Gastrocnemius medialis (tissue), 4 donors: ENCODE measurements at regions of chr7 and their contacts with region 1.

Region 1: GRCh38 chr7:66628361-66629140 is at the start of gene KCTD7:
- DNase-seq: peak; percentile 98
- ATAC-seq: peak; percentile 81
- H3K4me3 ChIP-seq: peak within 1 kb of the TSS; percentile 74 to 91 (median 80)
- H3K27ac ChIP-seq: peak within 1 kb of the TSS; percentile 86 to 98 (median 96)
- H3K4me1 ChIP-seq: peaks cover 6 to 11% of the 10 kb centered on the region in 2 donors
- H3K27me3 ChIP-seq: no peaks in the 10 kb centered on the region
- CTCF ChIP-seq: no peak
- POLR2A ChIP-seq: peak; percentile 99
- total RNA-seq, gene KCTD7: 3.0 to 6.0 (median 5.5) TPM

Region 2: GRCh38 chr7:66557608-66558143 is 70.9 kb before region 1 on chr7:
- in situ Hi-C with region 1: no loop called
- intact Hi-C with region 1: loop called (anchors 2 kb)
- DNase-seq: peak; percentile 27 to 55
- ATAC-seq: peak; percentile 64 to 73
- H3K4me3 ChIP-seq: no peak overlapping the region
- H3K27ac ChIP-seq: no peak overlapping the region
- H3K4me1 ChIP-seq: peaks cover 0 to 7% of the 10 kb centered on the region in 2 donors
- H3K27me3 ChIP-seq: no peaks in the 10 kb centered on the region
- CTCF ChIP-seq: peak; percentile 87 to 97 (median 91)
- POLR2A ChIP-seq: no peak

Region 3: DNA sequence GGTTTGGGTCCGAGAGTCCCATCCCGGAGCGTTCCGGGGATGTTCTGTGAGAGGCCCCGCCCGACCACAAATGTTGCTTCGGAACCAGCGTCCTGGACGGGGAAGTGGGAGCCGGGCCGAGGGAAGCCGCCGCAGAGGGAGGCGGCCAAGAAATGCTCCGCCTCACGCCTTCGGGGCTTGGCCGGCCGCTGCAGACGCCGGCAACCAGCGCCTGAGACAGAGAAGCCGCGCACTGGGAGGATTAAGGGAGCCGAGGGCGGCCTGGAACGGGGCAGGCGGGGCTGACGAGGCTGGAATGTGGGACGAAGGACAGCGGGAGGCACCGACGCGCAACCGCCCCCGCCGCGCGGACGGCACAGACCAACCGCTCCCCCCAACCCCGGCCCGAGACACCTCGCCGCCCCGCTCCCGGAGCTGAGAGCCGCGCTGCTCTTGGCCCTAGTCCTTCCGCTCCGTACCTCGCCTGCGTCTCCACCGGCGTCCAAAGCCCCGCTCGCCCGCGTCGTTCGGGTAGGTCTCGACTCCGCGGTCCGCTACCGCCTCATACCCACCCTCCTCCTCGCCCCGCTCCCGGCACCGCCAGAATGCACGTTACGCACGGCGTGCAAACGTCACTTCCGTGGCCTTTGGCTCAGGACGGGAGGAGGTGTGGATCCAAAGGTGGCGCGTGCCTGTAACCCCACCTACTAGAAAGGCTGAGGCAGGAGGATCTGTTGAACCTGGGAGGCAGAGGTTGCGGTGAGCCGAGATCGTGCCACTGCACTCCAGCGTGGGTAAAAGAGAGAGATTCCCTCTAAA is 36.6 kb before region 1 on chr7:
- in situ Hi-C with region 1: loop called in 1 of 4 experiments (anchors 5 kb)
- intact Hi-C with region 1: loop called (anchors 1 kb)
- DNase-seq: peak; percentile 88 to 92
- ATAC-seq: peak; percentile 97
- H3K4me3 ChIP-seq: peak overlapping the region; percentile 70 to 94 (median 88)
- H3K27ac ChIP-seq: peak overlapping the region; percentile 95 to 98 (median 96)
- H3K4me1 ChIP-seq: peaks cover 30 to 33% of the 10 kb centered on the region in 2 donors
- H3K27me3 ChIP-seq: no peaks in the 10 kb centered on the region
- CTCF ChIP-seq: no peak
- POLR2A ChIP-seq: peak; percentile 97 to 98

Region 4: GRCh38 chr7:66654123-66654732 is 25.7 kb after region 1 on chr7:
- in situ Hi-C with region 1: no loop called
- intact Hi-C with region 1: loop called (anchors 1 kb)
- DNase-seq: peak; percentile 95 to 97
- ATAC-seq: peak; percentile 97
- H3K4me3 ChIP-seq: peak overlapping the region; percentile 81 to 99 (median 87)
- H3K27ac ChIP-seq: peak overlapping the region; percentile 89 to 100 (median 99)
- H3K4me1 ChIP-seq: peaks cover 11 to 13% of the 10 kb centered on the region in 2 donors
- H3K27me3 ChIP-seq: no peaks in the 10 kb centered on the region
- CTCF ChIP-seq: peak in 2 of 5 experiments; percentile 3 to 32
- POLR2A ChIP-seq: peak; percentile 97 to 99

Region 5: DNA sequence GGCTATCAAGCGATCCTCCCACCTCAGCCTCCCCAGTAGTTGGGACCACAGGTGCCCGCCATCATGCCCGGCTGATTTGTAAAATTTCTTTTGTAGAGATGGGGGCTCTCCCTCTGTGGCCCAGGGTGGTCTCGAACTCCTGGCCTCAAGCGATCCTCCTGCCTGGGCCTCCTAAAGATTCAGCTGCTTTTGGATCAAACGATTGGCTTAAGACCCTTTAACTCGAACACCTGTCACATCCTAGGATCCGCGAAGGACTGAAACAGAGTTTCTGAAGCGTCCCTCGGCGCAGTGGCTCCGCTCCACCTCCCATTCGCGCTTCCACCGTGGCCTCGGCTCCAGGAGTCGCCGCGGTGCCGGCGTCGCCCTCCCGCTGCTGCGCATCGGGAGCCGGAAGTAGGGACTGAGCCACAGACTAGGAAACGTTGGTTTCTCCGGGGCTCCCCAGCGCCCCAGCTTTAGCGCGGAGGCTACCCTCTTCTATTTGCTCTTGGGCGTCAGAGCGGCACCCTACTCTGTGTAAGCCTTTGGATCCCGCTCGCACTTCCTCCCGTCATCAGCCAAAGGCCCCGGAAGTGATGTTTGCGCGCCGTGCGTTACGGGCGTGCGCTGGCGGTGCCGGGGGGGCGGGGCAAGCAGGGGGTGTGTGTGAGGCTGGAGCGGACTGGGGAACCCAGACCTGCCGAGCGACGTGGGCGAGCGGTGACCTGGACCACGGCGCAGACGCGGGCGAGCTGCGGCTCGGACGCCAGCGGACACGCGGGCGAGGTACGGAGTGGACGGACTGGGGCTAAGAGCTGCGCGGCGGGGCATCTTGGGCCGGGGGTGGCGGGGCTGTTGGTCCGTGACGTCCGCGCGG is 53.2 kb after region 1 on chr7:
- in situ Hi-C with region 1: no loop called
- intact Hi-C with region 1: loop called (anchors 2 kb)
- DNase-seq: peak; percentile 93 to 94
- ATAC-seq: peak; percentile 98 to 99
- H3K4me3 ChIP-seq: peak overlapping the region; percentile 80 to 100 (median 98)
- H3K27ac ChIP-seq: peak overlapping the region; percentile 98 to 100 (median 99)
- H3K4me1 ChIP-seq: peaks cover 12 to 20% of the 10 kb centered on the region in 2 donors
- H3K27me3 ChIP-seq: no peaks in the 10 kb centered on the region
- CTCF ChIP-seq: peak in 1 of 5 experiments; percentile 6
- POLR2A ChIP-seq: peak; percentile 95 to 96

Region 6: DNA sequence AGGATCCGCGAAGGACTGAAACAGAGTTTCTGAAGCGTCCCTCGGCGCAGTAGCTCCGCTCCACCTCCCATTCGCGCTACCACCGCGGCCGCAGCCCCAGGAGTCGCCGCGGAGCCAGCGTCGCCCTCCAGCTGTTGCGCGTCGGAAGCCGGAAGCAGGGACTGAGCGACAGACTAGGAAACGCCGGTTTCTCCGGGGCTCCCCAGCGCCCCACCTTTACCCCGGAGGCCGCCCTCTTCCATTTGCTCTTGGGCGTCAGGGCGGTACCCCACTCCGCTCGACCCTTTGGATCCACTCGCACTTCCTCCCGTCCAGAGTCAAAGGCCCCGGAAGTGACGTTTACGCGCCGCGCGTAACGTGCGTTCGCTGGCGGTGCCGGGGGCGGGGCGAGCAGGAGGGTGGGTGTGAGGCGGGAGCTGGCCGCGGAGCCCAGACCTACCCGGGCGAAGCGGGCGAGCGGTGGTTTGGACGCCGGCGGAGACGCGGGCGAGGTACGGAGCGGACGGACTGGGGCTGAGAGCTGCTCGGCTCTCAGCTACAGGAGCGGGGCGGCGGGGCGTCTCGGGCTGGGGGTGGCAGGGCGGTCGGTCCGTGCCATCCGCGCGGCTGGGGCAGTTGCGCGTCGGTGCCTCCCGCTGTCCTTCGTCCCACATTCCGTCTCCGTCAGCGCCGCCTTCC is 111.9 kb after region 1 on chr7 and contains the start of gene RABGEF1:
- in situ Hi-C with region 1: no loop called
- intact Hi-C with region 1: loop called (anchors 1 kb)
- DNase-seq: peak; percentile 95 to 96
- ATAC-seq: peak; percentile 91 to 92
- H3K4me3 ChIP-seq: peak within 1 kb of the TSS; percentile 82 to 100 (median 98)
- H3K27ac ChIP-seq: peak within 1 kb of the TSS; percentile 97 to 99 (median 98)
- H3K4me1 ChIP-seq: peaks cover 15 to 16% of the 10 kb centered on the region in 2 donors
- H3K27me3 ChIP-seq: no peaks in the 10 kb centered on the region
- CTCF ChIP-seq: peak in 1 of 5 experiments; percentile 16
- POLR2A ChIP-seq: peak; percentile 91 to 96
- total RNA-seq, gene RABGEF1: 18.8 to 29.7 (median 24.9) TPM

Region 7: GRCh38 chr7:66844552-66845378 is 216.2 kb after region 1 on chr7:
- in situ Hi-C with region 1: no loop called
- intact Hi-C with region 1: loop called (anchors 2 kb)
- DNase-seq: peak; percentile 95 to 98
- ATAC-seq: peak; percentile 95 to 98
- H3K4me3 ChIP-seq: peak overlapping the region; percentile 68 to 98 (median 86)
- H3K27ac ChIP-seq: peak overlapping the region; percentile 91 to 99 (median 97)
- H3K4me1 ChIP-seq: peaks cover 9 to 22% of the 10 kb centered on the region in 2 donors
- H3K27me3 ChIP-seq: no peaks in the 10 kb centered on the region
- CTCF ChIP-seq: peak; percentile 31 to 49 (median 38)
- POLR2A ChIP-seq: peak; percentile 87 to 91